BJ (cell line): ENCODE measurements at regions of chr1 and their contacts with region 1.

Region 1: GRCh38 chr1:51768971-51769588 is 109.4 kb downstream of the NRDC start:
- DNase-seq: no peak
- H3K4me3 ChIP-seq: no peak overlapping the region
- H3K27me3 ChIP-seq: no peaks in the 10 kb centered on the region
- CTCF ChIP-seq: peak; percentile 84

Region 2: GRCh38 chr1:51622455-51622913 is 146.6 kb before region 1 on chr1:
- CTCF ChIA-PET with region 1: interaction called, 20 read pairs
- POLR2A ChIA-PET with region 1: no interaction called
- DNase-seq: no peak
- H3K4me3 ChIP-seq: no peak overlapping the region
- H3K27me3 ChIP-seq: no peaks in the 10 kb centered on the region
- CTCF ChIP-seq: no peak

Region 3: GRCh38 chr1:51627678-51628077 is 141.4 kb before region 1 on chr1:
- CTCF ChIA-PET with region 1: interaction called, 20 read pairs
- POLR2A ChIA-PET with region 1: no interaction called
- DNase-seq: no peak
- H3K4me3 ChIP-seq: no peak overlapping the region
- H3K27me3 ChIP-seq: no peaks in the 10 kb centered on the region
- CTCF ChIP-seq: peak; percentile 57

Region 4: GRCh38 chr1:51697166-51697565 is 71.9 kb before region 1 on chr1:
- CTCF ChIA-PET with region 1: interaction called, 5 read pairs
- POLR2A ChIA-PET with region 1: interaction called, 23 read pairs
- DNase-seq: no peak
- H3K4me3 ChIP-seq: no peak overlapping the region
- H3K27me3 ChIP-seq: no peaks in the 10 kb centered on the region
- CTCF ChIP-seq: no peak

Region 5: GRCh38 chr1:52179085-52179484 is 410.0 kb after region 1 on chr1:
- CTCF ChIA-PET with region 1: no interaction called
- POLR2A ChIA-PET with region 1: no interaction called
- DNase-seq: no peak
- H3K4me3 ChIP-seq: no peak overlapping the region
- H3K27me3 ChIP-seq: no peaks in the 10 kb centered on the region
- CTCF ChIP-seq: no peak